MCF 10A (cell line): ENCODE measurements at regions of chr11 and their contacts with region 1.

Region 1: GRCh38 chr11:107689317-107690202 is 22.3 kb downstream of the SLN start:
- DNase-seq: peak; percentile 79
- H3K4me3 Mint-ChIP-seq: no peak overlapping the region
- H3K27ac Mint-ChIP-seq: no peak overlapping the region
- H3K4me1 Mint-ChIP-seq: no peaks in the 10 kb centered on the region
- H3K27me3 Mint-ChIP-seq: no peaks in the 10 kb centered on the region
- CTCF ChIP-seq: peak; percentile 83

Region 2: DNA sequence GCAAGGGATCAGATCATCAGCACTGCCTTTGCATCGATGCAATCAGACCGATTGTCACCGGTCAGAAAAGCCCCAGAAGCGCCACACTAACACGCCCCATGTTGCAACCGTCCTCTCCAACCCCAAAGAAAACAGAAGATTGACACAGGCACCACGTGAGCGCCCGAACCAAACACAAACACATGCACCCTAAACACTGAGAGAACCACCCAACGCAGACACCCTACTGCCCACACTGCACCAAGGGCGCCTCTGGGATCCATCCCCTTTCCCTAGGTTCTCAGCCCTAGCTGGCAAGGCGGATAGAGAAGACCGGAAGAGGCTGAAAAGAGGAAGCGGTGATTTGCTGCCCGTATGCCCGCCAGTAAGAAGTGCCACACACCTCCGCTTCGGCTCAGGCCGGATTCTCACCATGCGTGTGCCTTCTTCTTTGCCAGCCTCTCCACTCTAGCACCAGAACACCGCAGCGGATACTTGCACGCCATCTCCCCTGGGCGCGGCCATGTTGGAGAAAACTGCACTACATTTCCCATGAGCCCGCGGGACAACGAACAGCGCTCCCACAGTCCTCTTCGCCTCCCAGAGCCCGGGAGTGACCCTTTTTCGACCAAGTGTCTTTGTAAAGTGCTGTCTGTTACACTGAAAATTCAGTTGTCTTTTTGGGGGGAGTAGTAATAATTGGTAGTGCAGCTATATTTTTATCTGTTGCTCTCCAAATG is 124.2 kb before region 1 on chr11 and contains the start of gene ALKBH8:
- CTCF ChIA-PET with region 1: interaction called, 89 read pairs
- POLR2A ChIA-PET with region 1: interaction called, 8 read pairs
- intact Hi-C with region 1: loop called (anchors 1 kb)
- DNase-seq: peak; percentile 72
- H3K4me3 Mint-ChIP-seq: peak within 1 kb of the TSS; percentile 83
- H3K27ac Mint-ChIP-seq: peak within 1 kb of the TSS; percentile 82
- H3K4me1 Mint-ChIP-seq: peaks cover 23% of the 10 kb centered on the region
- H3K27me3 Mint-ChIP-seq: no peaks in the 10 kb centered on the region
- CTCF ChIP-seq: no peak
- total RNA-seq, gene ALKBH8: 5.1 and 7.3 TPM in 2 replicates

Region 3: GRCh38 chr11:107583629-107584195 is 105.8 kb before region 1 on chr11:
- CTCF ChIA-PET with region 1: interaction called, 114 read pairs
- POLR2A ChIA-PET with region 1: no interaction called
- intact Hi-C with region 1: no loop called
- DNase-seq: no peak
- H3K4me3 Mint-ChIP-seq: no peak overlapping the region
- H3K27ac Mint-ChIP-seq: no peak overlapping the region
- H3K4me1 Mint-ChIP-seq: peaks cover 6% of the 10 kb centered on the region
- H3K27me3 Mint-ChIP-seq: peaks cover 8% of the 10 kb centered on the region
- CTCF ChIP-seq: no peak

Region 4: DNA sequence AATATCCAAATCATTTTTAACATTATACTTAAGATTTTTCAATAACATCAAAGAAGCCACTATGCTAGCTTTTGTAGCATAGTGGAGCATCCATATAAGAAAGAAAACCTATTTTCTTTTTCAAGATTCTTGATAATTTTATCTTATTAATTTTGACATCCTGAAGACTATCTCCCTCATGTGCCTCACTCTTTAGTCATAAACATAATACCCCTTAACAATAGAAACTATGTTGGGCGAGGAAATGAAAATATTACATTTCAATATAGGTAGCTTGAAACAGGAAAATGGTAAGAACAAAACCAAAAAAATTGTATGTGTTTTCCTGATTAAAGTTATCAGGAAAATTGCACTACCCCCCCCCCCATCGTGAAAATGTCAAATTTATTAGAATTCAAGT is 58.5 kb before region 1 on chr11:
- CTCF ChIA-PET with region 1: no interaction called
- POLR2A ChIA-PET with region 1: no interaction called
- intact Hi-C with region 1: no loop called
- DNase-seq: no peak
- H3K4me3 Mint-ChIP-seq: no peak overlapping the region
- H3K27ac Mint-ChIP-seq: no peak overlapping the region
- H3K4me1 Mint-ChIP-seq: no peaks in the 10 kb centered on the region
- H3K27me3 Mint-ChIP-seq: peaks cover 98% of the 10 kb centered on the region
- CTCF ChIP-seq: no peak

Region 5: DNA sequence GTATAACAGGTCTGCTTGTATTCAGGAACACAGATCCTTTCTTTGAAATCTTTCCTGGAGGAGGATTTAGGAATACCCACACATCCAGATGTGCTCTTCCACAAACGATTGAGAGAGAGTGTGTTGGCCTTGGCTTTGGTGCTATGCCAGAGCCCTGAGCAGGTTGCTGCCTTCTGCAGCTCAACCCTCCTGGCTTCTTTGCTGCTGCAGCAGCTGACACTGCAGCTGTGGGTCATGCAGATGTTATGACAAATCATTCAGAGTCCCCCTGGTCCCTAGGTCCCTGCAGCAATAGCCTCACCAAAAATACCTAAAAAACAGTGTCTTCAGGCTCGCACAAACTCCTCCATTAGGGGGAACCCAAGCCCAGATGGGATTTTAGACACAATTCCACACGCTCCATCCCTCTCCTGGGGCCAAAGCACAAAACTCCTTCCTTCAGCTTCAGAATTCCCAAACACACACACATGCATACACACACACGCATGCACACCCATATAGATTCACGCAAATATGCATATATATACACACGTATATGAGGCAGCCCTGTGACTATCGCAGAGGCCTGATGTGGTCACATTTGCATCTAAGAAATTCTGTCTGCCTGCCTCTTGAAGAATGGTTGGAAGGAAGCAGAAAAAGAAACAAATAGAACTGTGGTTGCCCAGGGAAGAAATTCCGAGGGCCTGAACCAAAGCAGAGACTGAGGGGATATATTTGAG is 13.1 kb before region 1 on chr11:
- CTCF ChIA-PET with region 1: interaction called, 13 read pairs
- POLR2A ChIA-PET with region 1: no interaction called
- intact Hi-C with region 1: no loop called
- DNase-seq: no peak
- H3K4me3 Mint-ChIP-seq: no peak overlapping the region
- H3K27ac Mint-ChIP-seq: no peak overlapping the region
- H3K4me1 Mint-ChIP-seq: no peaks in the 10 kb centered on the region
- H3K27me3 Mint-ChIP-seq: no peaks in the 10 kb centered on the region
- CTCF ChIP-seq: no peak